CD8-positive, alpha-beta memory T cell (primary cell): ENCODE measurements at regions of chr21 and their contacts with region 1.

Region 1: GRCh38 chr21:42145569-42146272 is 73.2 kb upstream of the ABCG1 start:
- DNase-seq: peak; percentile 37 to 76 (median 62)
- H3K4me3 ChIP-seq: no peak overlapping the region
- H3K4me3 Mint-ChIP-seq: no peak overlapping the region
- H3K27ac ChIP-seq: no peak overlapping the region
- H3K27ac Mint-ChIP-seq: peak overlapping the region in 1 of 8 donors; percentile 72
- H3K4me1 ChIP-seq: peaks cover 4% of the 10 kb centered on the region
- H3K4me1 Mint-ChIP-seq: peaks cover 6 to 11% (median 9%) of the 10 kb centered on the region in 3 donors
- H3K27me3 ChIP-seq: no peaks in the 10 kb centered on the region
- H3K27me3 Mint-ChIP-seq: peaks cover 6 to 9% of the 10 kb centered on the region in 2 donors

Region 2: DNA sequence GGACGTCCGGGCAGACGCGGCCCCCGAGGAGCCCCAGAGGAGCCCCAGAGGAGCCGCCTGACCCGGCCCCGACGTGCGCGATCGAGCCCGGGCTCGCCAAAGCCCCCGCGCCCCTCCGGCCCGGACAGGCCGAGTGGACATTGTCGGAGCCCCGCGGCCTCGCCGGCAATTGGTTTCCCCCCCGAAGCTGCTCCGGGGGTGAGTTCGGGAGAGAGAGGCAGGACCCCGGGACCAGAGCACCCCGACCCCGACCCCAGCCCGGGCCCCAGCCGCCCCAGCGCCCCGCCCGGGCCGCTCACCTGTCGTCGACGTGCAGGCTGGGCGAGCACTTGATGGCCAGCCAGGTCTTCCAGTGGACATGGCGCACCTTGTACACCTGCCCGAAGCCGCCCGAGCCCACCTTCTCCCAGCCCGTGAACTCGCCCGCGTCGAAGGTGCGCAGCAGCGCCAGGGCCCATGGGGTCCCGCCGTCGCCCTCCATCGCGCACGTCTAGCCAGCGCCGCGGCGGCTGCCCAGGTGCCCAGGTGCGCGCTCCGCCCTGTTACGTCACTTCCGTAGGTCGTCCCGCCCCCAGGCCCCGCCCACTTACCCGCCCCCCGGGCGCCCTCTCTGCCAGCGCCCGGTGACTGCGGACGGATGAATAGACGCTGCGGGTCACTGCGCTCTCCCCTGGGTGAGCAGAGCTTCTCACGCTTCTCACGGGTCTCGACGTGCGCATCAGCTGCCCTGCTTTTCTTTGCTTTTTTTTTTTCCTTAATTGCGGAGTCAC is 379.0 kb before region 1 on chr21 and contains the start of gene RIPK4:
- CTCF ChIA-PET with region 1: no interaction called
- POLR2A ChIA-PET with region 1: no interaction called
- DNase-seq: peak in 4 of 5 donors; percentile 25 to 61 (median 42)
- H3K4me3 ChIP-seq: peak within 1 kb of the TSS; percentile 51
- H3K4me3 Mint-ChIP-seq: peak within 1 kb of the TSS; percentile 76 to 83 (median 82)
- H3K27ac ChIP-seq: no peak within 1 kb of the TSS
- H3K27ac Mint-ChIP-seq: peak within 1 kb of the TSS in 3 of 8 donors; percentile 47 to 57 (median 49)
- H3K4me1 ChIP-seq: peaks cover 18% of the 10 kb centered on the region
- H3K4me1 Mint-ChIP-seq: peaks cover 23 to 28% (median 25%) of the 10 kb centered on the region in 3 donors
- H3K27me3 ChIP-seq: peaks cover 34% of the 10 kb centered on the region
- H3K27me3 Mint-ChIP-seq: peaks cover 55 to 78% of the 10 kb centered on the region in 2 donors
- total RNA-seq, gene RIPK4: 0.18 TPM in 1 of 2 experiments, not detected in the other

Region 3: GRCh38 chr21:42251654-42252324 is 106.1 kb after region 1 on chr21:
- CTCF ChIA-PET with region 1: interaction called, 15 read pairs
- POLR2A ChIA-PET with region 1: no interaction called
- DNase-seq: no peak
- H3K4me3 ChIP-seq: no peak overlapping the region
- H3K4me3 Mint-ChIP-seq: no peak overlapping the region
- H3K27ac ChIP-seq: no peak overlapping the region
- H3K27ac Mint-ChIP-seq: peak overlapping the region in 1 of 8 donors; percentile 50
- H3K4me1 ChIP-seq: no peaks in the 10 kb centered on the region
- H3K4me1 Mint-ChIP-seq: peaks cover 23 to 51% (median 37%) of the 10 kb centered on the region in 3 donors
- H3K27me3 ChIP-seq: no peaks in the 10 kb centered on the region
- H3K27me3 Mint-ChIP-seq: peaks cover 0 to 2% of the 10 kb centered on the region in 2 donors